Mammary epithelial cell (primary cell): ENCODE measurements at regions of chrX and their contacts with region 1.

Region 1: GRCh38 chrX:69615779-69616456 is at the start of gene EDA:
- DNase-seq: peak; percentile 64
- H3K4me3 ChIP-seq: peak within 1 kb of the TSS; percentile 50 to 61 (median 57)
- H3K27ac ChIP-seq: no peak within 1 kb of the TSS
- H3K4me1 ChIP-seq: no peaks in the 10 kb centered on the region
- H3K27me3 ChIP-seq: peaks cover 4% of the 10 kb centered on the region
- CTCF ChIP-seq: no peak
- total RNA-seq, gene EDA: 0.17 to 1.4 TPM

Region 2: DNA sequence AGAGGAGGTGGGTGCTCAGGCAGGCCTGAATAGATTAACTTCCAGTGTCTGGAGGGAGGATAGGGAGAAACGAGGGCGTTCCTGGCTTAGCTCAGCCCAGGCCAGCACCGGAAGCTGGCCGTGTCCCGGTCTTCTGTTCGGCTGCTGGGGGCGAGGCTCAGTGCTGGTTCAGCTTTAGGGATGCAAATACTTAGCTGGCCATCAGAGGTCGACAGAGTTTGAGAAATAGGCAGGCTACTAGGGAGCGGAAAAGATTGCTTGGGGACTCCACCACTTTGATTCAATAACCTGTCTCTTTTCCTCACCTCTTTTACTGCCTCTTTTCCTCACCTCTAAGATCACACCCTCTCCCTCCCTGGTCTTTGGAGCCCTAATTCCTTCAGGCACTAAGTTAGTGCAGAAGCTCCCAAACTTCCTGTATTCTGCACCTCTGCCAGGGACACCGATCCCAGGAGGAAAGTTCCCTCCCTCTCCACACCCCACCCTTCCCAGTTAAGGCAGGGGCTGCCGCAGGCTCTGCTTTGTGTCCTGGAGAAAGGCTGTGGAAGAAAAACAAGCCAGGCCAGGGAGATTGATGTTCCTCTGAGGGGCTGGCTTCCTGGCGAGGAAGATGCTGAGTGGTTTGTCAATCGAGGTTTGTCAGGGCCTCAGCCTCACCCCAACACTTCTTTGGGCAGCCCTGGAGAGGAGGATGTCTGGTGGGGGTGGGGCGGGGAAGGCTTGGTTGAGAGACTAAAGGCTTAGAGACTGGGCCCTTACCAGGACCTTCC is 793.1 kb before region 1 on chrX:
- CTCF ChIA-PET with region 1: no interaction called
- dilution Hi-C with region 1: no loop called
- in situ Hi-C with region 1: no loop called
- intact Hi-C with region 1: loop called (anchors 5 kb)
- DNase-seq: no peak
- H3K4me3 ChIP-seq: no peak overlapping the region
- H3K27ac ChIP-seq: no peak overlapping the region
- H3K4me1 ChIP-seq: peaks cover 4% of the 10 kb centered on the region
- H3K27me3 ChIP-seq: no peaks in the 10 kb centered on the region
- CTCF ChIP-seq: peak; percentile 71 to 72

Region 3: GRCh38 chrX:69493193-69493592 is 122.7 kb before region 1 on chrX:
- CTCF ChIA-PET with region 1: interaction called, 3 read pairs
- dilution Hi-C with region 1: no loop called
- in situ Hi-C with region 1: no loop called
- intact Hi-C with region 1: loop called (anchors 5 kb)
- DNase-seq: peak; percentile 20
- H3K4me3 ChIP-seq: no peak overlapping the region
- H3K27ac ChIP-seq: no peak overlapping the region
- H3K4me1 ChIP-seq: peaks cover 5% of the 10 kb centered on the region
- H3K27me3 ChIP-seq: no peaks in the 10 kb centered on the region
- CTCF ChIP-seq: peak; percentile 44 to 49

Region 4: GRCh38 chrX:69538321-69538876 is 77.5 kb before region 1 on chrX:
- CTCF ChIA-PET with region 1: no interaction called
- dilution Hi-C with region 1: no loop called
- in situ Hi-C with region 1: no loop called
- intact Hi-C with region 1: loop called (anchors 2 kb)
- DNase-seq: peak; percentile 14
- H3K4me3 ChIP-seq: peak overlapping the region; percentile 28 to 54 (median 43)
- H3K27ac ChIP-seq: no peak overlapping the region
- H3K4me1 ChIP-seq: peaks cover 3% of the 10 kb centered on the region
- H3K27me3 ChIP-seq: no peaks in the 10 kb centered on the region
- CTCF ChIP-seq: peak; percentile 54 to 76

Region 5: DNA sequence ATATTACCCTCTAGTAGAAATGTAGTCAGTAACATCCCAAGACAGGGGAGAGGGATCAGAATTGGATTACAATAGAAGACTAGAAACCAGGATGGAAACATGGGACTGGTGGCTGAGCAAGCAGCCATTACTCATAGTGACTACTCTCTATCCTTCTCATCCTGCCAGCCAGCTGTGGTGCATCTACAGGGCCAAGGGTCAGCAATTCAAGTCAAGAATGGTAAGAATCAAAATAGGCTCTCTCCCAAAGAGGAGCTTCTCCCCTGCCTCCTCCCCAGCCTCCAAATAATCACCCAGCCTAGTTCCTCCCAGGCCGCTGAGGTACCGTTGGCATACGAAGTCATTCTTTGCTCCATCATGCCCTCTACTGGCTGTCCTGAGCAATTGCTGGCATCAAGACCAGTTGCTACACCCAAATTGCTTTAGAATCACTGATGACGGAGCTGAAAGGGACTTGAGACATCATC is 414.4 kb after region 1 on chrX:
- CTCF ChIA-PET with region 1: interaction called, 5 read pairs
- dilution Hi-C with region 1: no loop called
- in situ Hi-C with region 1: no loop called
- intact Hi-C with region 1: loop called (anchors 5 kb)
- DNase-seq: peak; percentile 51
- H3K4me3 ChIP-seq: no peak overlapping the region
- H3K27ac ChIP-seq: no peak overlapping the region
- H3K4me1 ChIP-seq: peaks cover 13% of the 10 kb centered on the region
- H3K27me3 ChIP-seq: no peaks in the 10 kb centered on the region
- CTCF ChIP-seq: peak; percentile 81 to 88

Region 6: DNA sequence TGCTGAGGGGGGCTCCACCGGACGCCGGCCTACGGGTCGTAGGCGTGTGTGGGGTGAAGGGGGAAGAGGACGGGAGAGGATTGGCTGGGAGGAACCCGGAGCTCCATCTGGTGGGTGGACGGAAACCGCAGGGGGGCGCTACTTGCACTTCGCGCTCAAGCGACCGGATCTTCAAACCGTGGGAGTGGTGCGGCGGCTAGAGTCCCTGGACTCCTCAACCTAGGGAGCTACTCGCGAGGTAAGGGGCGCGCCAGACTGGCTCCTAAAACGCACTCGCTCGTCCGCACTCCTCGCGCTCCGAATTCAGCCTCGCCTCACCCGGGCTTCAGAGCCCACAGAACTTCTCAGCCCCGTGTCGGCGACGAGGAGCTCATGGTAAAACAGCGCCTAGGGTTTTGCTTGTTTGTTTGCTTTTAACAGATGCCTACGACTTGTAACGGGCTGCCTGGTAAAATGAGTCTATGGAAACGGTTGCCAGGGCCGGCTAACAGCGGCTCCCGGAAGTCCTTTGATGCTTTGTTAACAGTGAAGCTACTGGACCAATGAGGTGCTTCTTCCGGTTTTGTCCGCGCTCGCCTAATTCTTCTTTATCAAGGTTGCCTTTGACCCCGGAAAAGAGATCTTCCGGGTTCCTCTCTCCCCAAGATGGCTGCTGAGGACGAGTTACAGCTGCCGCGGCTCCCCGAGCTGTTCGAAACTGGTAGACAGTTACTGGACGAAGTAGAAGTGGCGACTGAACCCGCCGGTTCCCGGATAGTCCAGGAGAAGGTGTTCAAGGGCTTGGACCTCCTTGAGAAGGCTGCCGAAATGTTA is 517.6 kb after region 1 on chrX and contains the start of gene IGBP1:
- CTCF ChIA-PET with region 1: interaction called, 5 read pairs
- dilution Hi-C with region 1: no loop called
- in situ Hi-C with region 1: no loop called
- intact Hi-C with region 1: loop called (anchors 2 kb)
- DNase-seq: peak; percentile 79
- H3K4me3 ChIP-seq: peak within 1 kb of the TSS; percentile 59 to 82 (median 68)
- H3K27ac ChIP-seq: peak within 1 kb of the TSS; percentile 89
- H3K4me1 ChIP-seq: peaks cover 18% of the 10 kb centered on the region
- H3K27me3 ChIP-seq: no peaks in the 10 kb centered on the region
- CTCF ChIP-seq: peak; percentile 49 to 62
- total RNA-seq, gene IGBP1: 31.1 to 67.3 TPM